PC-9 (cell line): ENCODE measurements at regions of chr13 and their contacts with region 1.

Region 1: DNA sequence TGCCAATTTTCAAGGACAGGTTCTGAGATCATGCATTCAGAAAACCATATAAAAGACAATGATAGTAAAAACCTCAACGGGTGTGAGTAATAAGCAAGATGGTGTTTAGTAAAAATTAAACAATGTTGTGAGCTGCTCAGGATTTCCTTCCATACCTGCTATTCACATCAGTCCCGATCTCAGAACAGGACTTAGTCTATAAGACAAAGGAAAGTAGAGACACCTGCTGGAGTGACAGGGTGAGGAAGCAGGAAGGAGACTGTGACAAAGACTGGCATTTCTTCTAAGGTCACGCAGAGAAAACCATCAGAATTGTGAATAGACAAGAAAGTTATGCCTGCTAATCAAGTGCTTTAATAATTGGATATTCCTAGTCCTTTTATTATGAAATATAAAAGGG is 648.0 kb downstream of the DACH1 start:
- DNase-seq: no peak
- H3K4me3 ChIP-seq: no peak overlapping the region
- H3K27ac ChIP-seq: no peak overlapping the region
- H3K4me1 ChIP-seq: no peaks in the 10 kb centered on the region
- H3K27me3 ChIP-seq: no peaks in the 10 kb centered on the region
- CTCF ChIP-seq: no peak; the same call in 1 of the 2 replicates

Region 2: DNA sequence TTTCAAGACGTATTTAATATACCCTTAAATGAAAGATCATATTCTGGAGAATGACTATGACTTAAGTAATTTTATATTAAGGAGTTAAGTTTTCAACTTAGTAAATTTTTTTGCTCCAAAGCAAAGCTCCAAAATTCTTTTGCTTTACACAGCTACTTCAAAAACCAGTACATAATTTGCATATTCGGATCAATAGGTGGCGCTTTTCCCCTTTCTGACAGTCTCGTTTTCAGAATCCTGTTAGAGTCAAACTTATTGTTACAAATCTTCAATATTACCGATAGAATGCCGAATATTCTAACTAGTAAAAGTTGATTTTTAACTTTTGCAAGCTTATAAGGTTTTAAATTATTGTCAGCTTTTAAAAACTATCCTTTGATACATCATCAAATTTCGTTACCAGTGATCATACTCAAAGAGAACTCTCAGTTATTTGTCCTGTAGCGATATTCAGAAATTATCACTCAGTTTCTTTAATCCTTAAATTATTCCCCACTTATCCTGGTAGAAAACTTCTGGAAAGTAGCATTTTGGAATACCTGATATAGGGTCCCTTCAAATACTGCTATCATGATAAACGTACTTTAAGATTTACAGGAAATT is 258.0 kb before region 1 on chr13:
- CTCF ChIA-PET with region 1: no interaction called
- POLR2A ChIA-PET with region 1: no interaction called
- intact Hi-C with region 1: loop called (anchors 5 kb)
- DNase-seq: peak in 1 of 2 experiments; percentile 3
- H3K4me3 ChIP-seq: no peak overlapping the region
- H3K27ac ChIP-seq: no peak overlapping the region
- H3K4me1 ChIP-seq: no peaks in the 10 kb centered on the region
- H3K27me3 ChIP-seq: no peaks in the 10 kb centered on the region
- CTCF ChIP-seq: peak; percentile 68